Endothelial cell of umbilical vein (primary cell): ENCODE measurements at regions of chr1 and their contacts with region 1.

Region 1: GRCh38 chr1:8962812-8963530 is 17.3 kb downstream of the CA6 start:
- DNase-seq: peak; percentile 40
- H3K4me3 ChIP-seq: no peak overlapping the region
- H3K27ac ChIP-seq: no peak overlapping the region
- H3K4me1 ChIP-seq: peaks cover 3% of the 10 kb centered on the region
- H3K27me3 ChIP-seq: no peaks in the 10 kb centered on the region
- CTCF ChIP-seq: peak; percentile 50 to 62
- POLR2A ChIP-seq: no peak

Region 2: GRCh38 chr1:8925406-8925805 is 37.6 kb before region 1 on chr1:
- CTCF ChIA-PET with region 1: interaction called, 31 read pairs
- POLR2A ChIA-PET with region 1: no interaction called
- dilution Hi-C with region 1: no loop called
- intact Hi-C with region 1: no loop called
- DNase-seq: no peak
- H3K4me3 ChIP-seq: no peak overlapping the region
- H3K27ac ChIP-seq: no peak overlapping the region
- H3K4me1 ChIP-seq: no peaks in the 10 kb centered on the region
- H3K27me3 ChIP-seq: peaks cover 4 to 14% of the 10 kb centered on the region in 2 experiments
- CTCF ChIP-seq: no peak
- POLR2A ChIP-seq: no peak

Region 3: DNA sequence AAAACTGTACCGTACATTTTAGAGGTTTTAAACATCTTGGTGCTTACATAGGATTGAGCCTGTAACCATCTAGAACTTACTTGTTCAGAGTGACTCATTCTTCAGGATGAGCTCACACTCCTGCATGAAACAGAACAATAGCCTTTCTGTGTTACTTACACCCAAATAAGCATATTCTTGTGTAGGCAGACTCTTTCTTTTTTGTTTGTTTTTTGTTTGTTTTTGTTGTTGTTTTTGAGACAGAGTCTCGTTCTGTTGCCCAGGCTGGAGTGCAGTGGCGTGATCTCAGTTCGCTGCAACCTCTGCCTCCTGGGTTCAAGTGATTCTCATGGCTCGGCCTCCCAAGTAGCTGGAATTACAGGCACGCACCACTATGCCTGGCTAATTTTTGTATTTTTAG is 21.1 kb before region 1 on chr1:
- CTCF ChIA-PET with region 1: interaction called, 21 read pairs
- POLR2A ChIA-PET with region 1: no interaction called
- dilution Hi-C with region 1: no loop called
- intact Hi-C with region 1: no loop called
- DNase-seq: peak; percentile 76
- H3K4me3 ChIP-seq: no peak overlapping the region
- H3K27ac ChIP-seq: peak overlapping the region; percentile 54
- H3K4me1 ChIP-seq: peaks cover 15% of the 10 kb centered on the region
- H3K27me3 ChIP-seq: no peaks in the 10 kb centered on the region
- CTCF ChIP-seq: no peak
- POLR2A ChIP-seq: no peak

Region 4: GRCh38 chr1:8976896-8977450 is 14.0 kb after region 1 on chr1:
- CTCF ChIA-PET with region 1: interaction called, 15 read pairs
- POLR2A ChIA-PET with region 1: no interaction called
- dilution Hi-C with region 1: no loop called
- intact Hi-C with region 1: no loop called
- DNase-seq: no peak
- H3K4me3 ChIP-seq: no peak overlapping the region
- H3K27ac ChIP-seq: no peak overlapping the region
- H3K4me1 ChIP-seq: peaks cover 12% of the 10 kb centered on the region
- H3K27me3 ChIP-seq: no peaks in the 10 kb centered on the region
- CTCF ChIP-seq: no peak
- POLR2A ChIP-seq: no peak

Region 5: DNA sequence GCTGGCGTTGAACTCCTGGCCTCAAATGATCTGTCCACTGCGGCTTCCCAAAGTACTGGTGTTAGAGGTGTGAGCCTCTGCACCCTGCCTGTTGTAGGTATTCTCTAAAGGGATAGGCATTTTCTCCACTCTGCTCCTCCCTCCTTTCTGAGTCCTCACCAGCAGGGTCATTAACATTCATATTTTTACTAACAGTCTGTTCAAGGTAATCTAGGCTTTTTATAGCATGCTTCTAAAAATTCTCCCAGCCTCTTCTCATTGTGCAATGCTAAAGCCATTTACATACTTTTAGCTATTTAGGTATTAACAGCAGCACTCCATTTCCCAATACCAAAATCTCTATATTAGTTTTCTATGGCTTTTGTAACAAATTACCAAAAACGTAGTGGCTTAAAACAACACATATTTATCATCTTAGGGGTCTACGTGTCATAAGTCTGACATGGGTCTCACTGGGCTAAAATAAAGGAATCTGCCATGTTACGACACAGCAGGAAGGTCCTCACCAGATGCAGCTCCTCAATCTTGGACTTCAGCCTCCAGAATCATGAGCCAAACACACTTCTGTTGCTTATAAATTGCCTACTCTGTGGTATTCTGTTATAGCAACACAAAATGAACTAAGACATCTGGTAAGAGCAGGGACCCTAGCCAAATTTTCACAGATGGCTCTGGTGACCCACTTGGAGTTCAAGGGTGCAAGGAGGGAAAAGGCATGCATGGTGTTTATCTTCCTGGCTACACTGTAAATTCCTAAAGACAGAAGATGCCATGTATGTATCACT is 66.1 kb after region 1 on chr1:
- CTCF ChIA-PET with region 1: no interaction called
- POLR2A ChIA-PET with region 1: no interaction called
- dilution Hi-C with region 1: no loop called
- intact Hi-C with region 1: no loop called
- DNase-seq: no peak
- H3K4me3 ChIP-seq: no peak overlapping the region
- H3K27ac ChIP-seq: no peak overlapping the region
- H3K4me1 ChIP-seq: no peaks in the 10 kb centered on the region
- H3K27me3 ChIP-seq: peaks cover 0 to 6% of the 10 kb centered on the region in 2 experiments
- CTCF ChIP-seq: no peak
- POLR2A ChIP-seq: no peak